ENCODE measurements at regions of chr20 and their contacts with region 1.

Region 1: GRCh38 chr20:33337531-33338165 is 54.6 kb downstream of the BPIFB1 start:
- DNase-seq: no peak
- H3K4me3 ChIP-seq: no peak overlapping the region
- H3K27ac ChIP-seq: no peak overlapping the region
- H3K4me1 ChIP-seq: peaks cover 11% of the 10 kb centered on the region
- CTCF ChIP-seq: no peak

Region 2: GRCh38 chr20:33217052-33217451 is 120.6 kb before region 1 on chr20 and contains the start of gene BPIFA3:
- CTCF ChIA-PET with region 1: no interaction called
- POLR2A ChIA-PET with region 1: no interaction called
- intact Hi-C with region 1: no loop called
- DNase-seq: no peak
- H3K4me3 ChIP-seq: no peak within 1 kb of the TSS
- H3K27ac ChIP-seq: no peak within 1 kb of the TSS
- H3K4me1 ChIP-seq: no peaks in the 10 kb centered on the region
- CTCF ChIP-seq: no peak
- total RNA-seq, gene BPIFA3: not detected in 2 replicates

Region 3: DNA sequence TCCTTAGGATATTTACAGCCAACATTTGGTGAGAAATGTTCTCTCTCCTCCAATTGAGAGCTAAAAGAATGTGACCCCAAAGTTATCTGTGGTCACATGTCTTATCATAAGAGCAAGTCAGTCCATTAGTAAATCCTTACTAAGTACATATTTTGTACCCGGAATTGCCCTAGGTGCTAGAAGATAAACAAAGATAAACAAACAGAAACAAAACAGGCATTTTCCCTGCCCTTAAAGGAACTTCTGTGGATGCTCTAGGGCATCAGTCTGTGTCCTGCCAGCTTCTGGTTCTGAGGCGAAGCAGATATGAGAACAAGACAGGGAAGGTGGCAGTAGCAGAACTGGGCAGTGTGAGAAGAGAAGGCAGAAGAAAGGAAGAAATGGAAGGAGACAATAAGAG is 21.8 kb after region 1 on chr20:
- CTCF ChIA-PET with region 1: no interaction called
- POLR2A ChIA-PET with region 1: no interaction called
- intact Hi-C with region 1: no loop called
- DNase-seq: no peak
- H3K4me3 ChIP-seq: no peak overlapping the region
- H3K27ac ChIP-seq: no peak overlapping the region
- H3K4me1 ChIP-seq: no peaks in the 10 kb centered on the region
- CTCF ChIP-seq: no peak

Region 4: DNA sequence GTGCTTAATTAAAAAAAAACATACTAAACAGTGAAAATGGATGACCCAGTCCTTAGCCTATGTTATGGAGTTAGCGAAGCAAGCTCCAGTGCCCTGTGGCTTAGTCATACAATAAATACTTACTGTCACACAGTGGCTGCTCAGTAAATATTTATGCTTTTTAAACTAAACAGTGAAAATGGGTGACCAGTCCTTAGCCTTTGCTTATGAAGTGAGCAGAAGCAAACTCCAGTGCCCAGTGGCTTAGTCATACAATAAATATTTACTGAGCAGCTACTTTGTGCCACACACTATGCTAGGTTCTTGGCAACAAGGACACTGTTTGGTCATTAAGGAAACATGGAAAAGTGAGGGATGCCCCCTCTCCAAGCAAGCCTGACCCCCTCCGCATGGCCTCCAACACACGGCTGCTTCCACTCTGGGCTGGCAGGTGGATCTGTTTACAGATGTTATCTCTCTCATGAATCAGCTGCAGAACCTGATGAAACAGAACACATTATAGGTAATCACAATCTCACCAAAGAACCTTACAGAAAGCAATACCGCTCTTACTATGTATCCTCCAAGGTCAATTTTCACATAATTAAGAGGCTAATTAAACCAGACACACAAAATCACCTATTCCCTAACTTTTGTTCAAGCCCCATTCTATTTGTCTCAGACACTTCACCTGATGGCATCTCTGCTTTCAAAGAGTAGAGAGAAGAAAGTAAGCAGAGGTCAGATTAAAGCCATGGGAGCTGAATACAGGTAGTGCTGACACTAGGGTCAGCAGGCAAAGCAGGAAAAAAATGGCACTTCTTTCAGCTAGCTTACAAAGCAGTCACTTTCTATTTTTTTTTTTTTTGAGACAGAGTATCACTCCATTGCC is 36.3 kb after region 1 on chr20:
- CTCF ChIA-PET with region 1: no interaction called
- POLR2A ChIA-PET with region 1: no interaction called
- intact Hi-C with region 1: no loop called
- DNase-seq: no peak
- H3K4me3 ChIP-seq: no peak overlapping the region
- H3K27ac ChIP-seq: no peak overlapping the region
- H3K4me1 ChIP-seq: no peaks in the 10 kb centered on the region
- CTCF ChIP-seq: no peak

Region 5: GRCh38 chr20:33415948-33416347 is 78.3 kb after region 1 on chr20:
- CTCF ChIA-PET with region 1: no interaction called
- POLR2A ChIA-PET with region 1: interaction called, 15 read pairs
- intact Hi-C with region 1: no loop called
- DNase-seq: peak; percentile 62
- H3K4me3 ChIP-seq: no peak overlapping the region
- H3K27ac ChIP-seq: no peak overlapping the region
- H3K4me1 ChIP-seq: peaks cover 15% of the 10 kb centered on the region
- CTCF ChIP-seq: peak; percentile 73